ENCODE measurements at regions of chr2 and their contacts with region 1.

Region 1: GRCh38 chr2:41869542-41870264 is 178.1 kb upstream of the PKDCC start:
- DNase-seq: peak; percentile 86
- H3K4me3 ChIP-seq: no peak overlapping the region; a peak in 1 of 4 replicates
- H3K27ac ChIP-seq: peak overlapping the region in 1 of 2 experiments; percentile 39; a peak in 1 of 4 replicates
- H3K4me1 ChIP-seq: peaks cover 0 to 26% of the 10 kb centered on the region in 2 experiments; a peak in 3 of 4 replicates
- H3K27me3 ChIP-seq: no peaks in the 10 kb centered on the region
- CTCF ChIP-seq: peak; percentile 91
- EP300 ChIP-seq: 0 out of 4 replicates have a peak, but pooled peaks of 1 of the 2 experiments have one; percentile 16
- RAD21 ChIP-seq: peak; percentile 100

Region 2: GRCh38 chr2:41853427-41854216 is 16.1 kb before region 1 on chr2:
- CTCF ChIA-PET with region 1: interaction called, 334 read pairs
- POLR2A ChIA-PET with region 1: interaction called, 5 read pairs
- DNase-seq: peak; percentile 71
- H3K4me3 ChIP-seq: no peak overlapping the region
- H3K27ac ChIP-seq: no peak overlapping the region
- H3K4me1 ChIP-seq: peaks cover 0 to 7% of the 10 kb centered on the region in 2 experiments; a peak in 1 of 4 replicates
- H3K27me3 ChIP-seq: no peaks in the 10 kb centered on the region; the same call in 1 of the 2 replicates
- CTCF ChIP-seq: peak; percentile 91
- EP300 ChIP-seq: 0 out of 4 replicates have a peak, but pooled peaks of 1 of the 2 experiments have one; percentile 13
- RAD21 ChIP-seq: peak; percentile 99

Region 3: GRCh38 chr2:41928526-41928925 is 58.8 kb after region 1 on chr2:
- CTCF ChIA-PET with region 1: interaction called, 17 read pairs
- POLR2A ChIA-PET with region 1: no interaction called
- DNase-seq: no peak
- H3K4me3 ChIP-seq: no peak overlapping the region
- H3K27ac ChIP-seq: no peak overlapping the region
- H3K4me1 ChIP-seq: peaks cover 3 to 53% of the 10 kb centered on the region in 2 experiments; a peak in 3 of 4 replicates
- H3K27me3 ChIP-seq: no peaks in the 10 kb centered on the region; the same call in 1 of the 2 replicates
- CTCF ChIP-seq: no peak
- EP300 ChIP-seq: no peak
- RAD21 ChIP-seq: no peak

Region 4: DNA sequence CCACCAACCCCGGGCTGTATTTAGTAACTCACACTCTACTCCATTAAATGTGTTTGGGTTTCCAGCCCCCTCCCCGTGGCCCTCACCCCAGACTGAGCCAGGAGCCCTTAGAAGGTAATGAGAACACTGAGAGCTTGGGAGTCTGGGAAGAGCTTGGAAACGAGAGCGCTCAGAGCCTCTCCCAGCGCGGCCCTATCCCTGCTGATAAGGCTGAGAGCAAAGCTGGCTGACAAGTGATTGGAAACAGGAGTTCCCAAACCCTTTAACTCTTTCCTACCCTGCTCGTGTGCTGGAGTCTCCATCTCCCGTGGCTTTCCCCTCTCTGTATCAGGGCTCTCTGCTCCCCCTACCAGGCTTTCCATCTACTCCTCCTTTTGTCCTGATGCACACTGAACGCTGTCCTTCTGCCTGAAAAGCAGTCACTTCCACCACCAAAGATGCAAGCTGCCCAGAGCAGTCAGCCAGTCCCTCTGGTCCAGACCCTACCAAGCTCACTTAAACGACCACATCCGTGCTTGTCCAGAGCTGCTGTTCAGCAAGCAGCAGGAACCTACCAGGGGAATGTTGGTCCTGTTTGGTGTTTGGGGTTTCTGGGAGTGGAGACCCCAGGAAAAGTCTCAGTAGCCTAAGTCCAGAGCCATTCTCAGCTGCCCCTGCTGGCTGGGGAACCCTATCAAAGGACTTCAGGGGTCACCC is 78.1 kb after region 1 on chr2:
- CTCF ChIA-PET with region 1: interaction called, 108 read pairs
- POLR2A ChIA-PET with region 1: interaction called, 8 read pairs
- DNase-seq: peak; percentile 81
- H3K4me3 ChIP-seq: no peak overlapping the region; a peak in 1 of 4 replicates
- H3K27ac ChIP-seq: peak overlapping the region in 1 of 2 experiments; percentile 95; a peak in 2 of 4 replicates
- H3K4me1 ChIP-seq: peaks cover 0 to 52% of the 10 kb centered on the region in 2 experiments; a peak in 3 of 4 replicates
- H3K27me3 ChIP-seq: peaks cover 15% of the 10 kb centered on the region
- CTCF ChIP-seq: no peak
- EP300 ChIP-seq: peak in 1 of 2 experiments; percentile 89; a peak in 2 of 4 replicates
- RAD21 ChIP-seq: peak; percentile 45

Region 5: GRCh38 chr2:42028571-42029148 is 159.0 kb after region 1 on chr2:
- CTCF ChIA-PET with region 1: interaction called, 10 read pairs
- POLR2A ChIA-PET with region 1: no interaction called
- DNase-seq: no peak
- H3K4me3 ChIP-seq: no peak overlapping the region
- H3K27ac ChIP-seq: no peak overlapping the region
- H3K4me1 ChIP-seq: peaks cover 30 to 32% of the 10 kb centered on the region in 2 experiments
- H3K27me3 ChIP-seq: no peaks in the 10 kb centered on the region
- CTCF ChIP-seq: no peak
- EP300 ChIP-seq: no peak
- RAD21 ChIP-seq: no peak

Region 6: DNA sequence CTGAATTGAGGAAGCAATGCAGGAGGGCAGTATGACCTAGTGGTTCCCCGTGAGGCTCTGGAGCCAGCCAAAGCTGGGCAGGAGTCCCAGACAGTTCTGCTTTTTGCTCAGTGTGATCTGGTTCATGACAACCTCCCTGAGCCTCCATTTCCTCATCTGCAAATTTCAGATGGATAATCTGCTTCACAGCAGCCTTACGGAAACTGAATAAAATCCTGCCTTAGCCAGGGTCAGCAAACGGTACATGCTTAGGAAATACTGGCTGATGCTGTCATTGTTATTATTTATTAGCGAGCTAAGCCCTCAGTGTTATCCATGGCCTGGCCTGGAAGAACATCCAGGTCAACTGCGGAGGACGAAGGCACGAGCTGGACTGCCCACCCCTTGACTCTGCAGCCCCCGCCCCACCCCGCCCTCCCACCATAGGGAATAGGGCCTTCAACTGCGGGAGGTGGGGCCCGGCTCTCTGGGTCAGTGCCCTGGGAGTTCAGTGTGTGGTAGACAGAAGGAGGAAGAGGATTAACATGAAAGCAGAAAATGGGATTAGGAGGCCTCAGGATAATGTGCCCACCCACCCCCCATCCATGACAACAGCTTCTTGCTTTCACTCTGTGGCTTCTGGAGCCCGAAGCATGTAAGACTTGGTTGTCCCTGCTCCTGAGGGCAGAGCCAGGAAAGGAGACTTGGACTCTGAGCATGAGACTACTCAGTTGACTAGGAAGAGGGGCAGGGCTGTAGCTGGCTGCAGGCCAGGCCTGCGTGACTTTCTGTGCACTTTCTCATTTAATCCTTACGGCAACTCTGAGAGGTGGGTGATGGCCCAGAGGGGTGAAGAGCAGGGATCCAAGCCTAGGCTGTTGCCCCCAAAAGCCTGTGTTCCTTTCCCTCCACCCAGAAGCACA is 191.3 kb after region 1 on chr2:
- CTCF ChIA-PET with region 1: interaction called, 42 read pairs
- POLR2A ChIA-PET with region 1: interaction called, 3 read pairs
- DNase-seq: no peak
- H3K4me3 ChIP-seq: no peak overlapping the region
- H3K27ac ChIP-seq: peak overlapping the region in 1 of 2 experiments; percentile 58; a peak in 2 of 4 replicates
- H3K4me1 ChIP-seq: peaks cover 0 to 21% of the 10 kb centered on the region in 2 experiments; a peak in 1 of 4 replicates
- H3K27me3 ChIP-seq: no peaks in the 10 kb centered on the region
- CTCF ChIP-seq: no peak
- EP300 ChIP-seq: no peak
- RAD21 ChIP-seq: no peak

Measured in SK-N-SH (cell line).